ENCODE measurements at regions of chr17 and their contacts with region 1.

Region 1: DNA sequence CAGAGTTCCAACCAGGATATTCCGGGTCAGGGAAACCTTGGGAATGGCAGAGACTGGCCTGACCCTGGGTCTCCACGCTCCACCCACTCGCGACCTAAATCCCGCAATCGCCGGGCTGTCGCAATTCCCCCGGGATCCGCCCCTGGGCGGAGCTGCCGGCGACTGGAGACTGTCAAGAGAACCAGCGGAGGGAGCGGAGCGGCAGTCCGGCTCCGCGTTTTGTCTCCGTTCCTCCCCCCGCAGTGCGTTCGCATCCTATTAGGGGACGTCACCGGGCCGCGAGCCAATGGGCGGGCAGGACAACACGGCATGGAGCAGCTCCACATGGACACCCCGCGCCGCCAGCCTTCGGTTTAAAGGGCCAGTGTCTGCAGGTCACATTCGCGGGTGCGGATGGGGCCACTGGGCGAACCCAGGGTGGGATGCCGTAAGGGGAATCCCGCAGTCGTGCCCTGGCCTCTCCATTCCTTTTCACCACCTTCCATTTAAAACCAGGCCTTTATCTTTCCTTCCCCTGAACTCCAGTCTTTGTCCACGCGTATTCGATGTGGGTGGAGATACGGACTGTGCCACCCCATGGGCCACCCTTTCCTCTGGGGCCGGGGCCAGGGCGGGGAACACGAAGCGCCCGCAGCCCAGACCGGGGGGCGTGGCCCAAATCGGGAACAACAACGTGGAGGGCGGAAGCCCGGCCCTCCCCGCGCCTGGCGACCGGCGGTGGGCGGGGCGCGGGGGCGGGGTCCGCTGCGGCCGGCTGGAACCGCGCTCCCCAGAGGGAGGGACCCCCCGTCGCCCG is 764 bp upstream of the MNT start:
- DNase-seq: peak; percentile 100
- H3K4me3 ChIP-seq: peak overlapping the region; percentile 97
- H3K4me3 Mint-ChIP-seq: peak overlapping the region; percentile 86
- H3K27ac Mint-ChIP-seq: peak overlapping the region; percentile 93
- H3K4me1 ChIP-seq: peaks cover 24% of the 10 kb centered on the region
- H3K4me1 Mint-ChIP-seq: peaks cover 27% of the 10 kb centered on the region
- H3K27me3 ChIP-seq: no peaks in the 10 kb centered on the region
- H3K27me3 Mint-ChIP-seq: no peaks in the 10 kb centered on the region
- CTCF ChIP-seq: no peak

Region 2: DNA sequence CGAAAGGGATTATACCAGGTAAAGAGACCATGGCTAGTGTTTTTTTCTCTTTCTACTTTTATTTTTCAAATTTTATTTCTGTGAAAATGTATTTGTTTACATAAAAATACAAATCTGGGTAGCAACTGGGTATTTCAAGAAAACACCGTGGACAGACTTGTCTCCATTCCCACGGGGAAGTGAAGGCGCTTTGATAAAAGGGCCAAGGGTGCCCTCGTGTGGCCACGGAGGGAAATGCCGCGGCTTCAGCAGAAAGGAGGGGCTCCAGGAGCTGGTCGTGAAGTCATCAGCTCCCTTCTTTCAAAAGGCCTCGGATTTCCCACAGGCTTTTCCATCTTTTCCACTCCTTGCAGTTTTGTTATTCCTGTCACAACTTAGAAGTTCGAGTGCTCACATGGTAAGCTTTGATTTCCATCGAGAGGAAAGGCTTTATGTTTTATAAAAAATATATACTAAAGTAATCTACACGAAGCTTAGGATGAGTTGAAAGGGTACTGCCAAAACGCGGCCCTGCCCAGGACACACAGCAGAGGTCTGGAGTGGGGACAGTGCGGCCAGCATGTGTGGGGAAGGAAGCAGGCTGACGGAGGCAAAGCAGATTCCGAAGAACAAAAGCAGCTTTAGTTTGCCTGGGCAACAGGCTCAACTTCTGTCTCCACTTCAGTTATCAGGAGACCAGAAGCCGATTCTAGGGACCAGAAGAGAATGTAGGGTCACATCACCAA is 14.5 kb after region 1 on chr17:
- CTCF ChIA-PET with region 1: interaction called, 18 read pairs
- POLR2A ChIA-PET with region 1: interaction called, 11 read pairs
- intact Hi-C with region 1: loop called (anchors 2 kb)
- DNase-seq: peak; percentile 85 to 92
- H3K4me3 ChIP-seq: no peak overlapping the region
- H3K4me3 Mint-ChIP-seq: no peak overlapping the region
- H3K27ac Mint-ChIP-seq: no peak overlapping the region
- H3K4me1 ChIP-seq: no peaks in the 10 kb centered on the region
- H3K4me1 Mint-ChIP-seq: no peaks in the 10 kb centered on the region
- H3K27me3 ChIP-seq: no peaks in the 10 kb centered on the region
- H3K27me3 Mint-ChIP-seq: no peaks in the 10 kb centered on the region
- CTCF ChIP-seq: peak; percentile 97 to 98